Lower leg skin (tissue), 4 donors: ENCODE measurements at regions of chr6 and their contacts with region 1.

Region 1: GRCh38 chr6:112396221-112396620 is 49.1 kb downstream of the RFPL4B start:
- DNase-seq: no peak
- H3K4me3 ChIP-seq: no peak overlapping the region
- CTCF ChIP-seq: no peak
- POLR2A ChIP-seq: no peak

Region 2: DNA sequence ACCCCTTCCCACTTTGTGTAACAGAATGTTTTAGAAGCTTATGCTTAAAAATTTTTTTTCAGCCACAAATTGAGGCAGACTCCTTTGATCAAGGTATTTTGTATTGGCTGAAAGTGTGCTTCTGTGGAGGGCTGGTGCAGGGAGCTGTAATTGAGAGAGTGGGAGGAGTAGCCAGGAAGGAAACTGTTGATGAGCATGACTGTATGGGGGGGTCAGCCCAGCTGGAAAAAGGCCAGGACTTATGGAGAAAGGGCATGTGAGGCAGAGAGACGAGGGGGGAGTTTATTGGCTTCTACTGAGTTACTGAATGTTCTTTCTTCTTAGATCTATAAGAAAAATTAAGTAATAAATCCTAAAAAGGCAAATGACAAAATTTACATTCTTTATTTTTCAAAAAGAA is 35.7 kb before region 1 on chr6:
- intact Hi-C with region 1: no loop called
- DNase-seq: no peak
- H3K4me3 ChIP-seq: no peak overlapping the region
- CTCF ChIP-seq: no peak
- POLR2A ChIP-seq: no peak

Region 3: DNA sequence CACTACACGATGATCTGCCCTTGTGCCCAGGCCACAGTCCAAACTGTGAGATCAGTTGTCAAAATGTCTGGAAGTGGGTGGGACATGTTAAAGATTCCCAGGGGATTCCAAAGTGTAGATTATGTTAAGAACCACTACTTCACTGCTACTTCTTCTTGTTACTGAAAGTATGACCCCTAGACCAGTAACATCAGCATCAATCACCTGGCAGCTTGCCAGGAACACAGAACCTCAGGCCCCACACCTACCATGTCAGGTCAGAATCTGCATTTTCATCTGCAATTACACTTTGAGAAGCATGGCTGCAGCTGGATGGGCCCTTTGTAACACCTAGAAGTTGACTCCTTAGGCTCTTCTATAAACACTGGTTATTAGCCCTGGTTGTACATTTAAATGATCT is 13.0 kb before region 1 on chr6:
- intact Hi-C with region 1: loop called (anchors 1 kb)
- DNase-seq: no peak
- H3K4me3 ChIP-seq: no peak overlapping the region
- CTCF ChIP-seq: no peak
- POLR2A ChIP-seq: no peak